ENCODE measurements at regions of chr16 and their contacts with region 1.

Region 1: DNA sequence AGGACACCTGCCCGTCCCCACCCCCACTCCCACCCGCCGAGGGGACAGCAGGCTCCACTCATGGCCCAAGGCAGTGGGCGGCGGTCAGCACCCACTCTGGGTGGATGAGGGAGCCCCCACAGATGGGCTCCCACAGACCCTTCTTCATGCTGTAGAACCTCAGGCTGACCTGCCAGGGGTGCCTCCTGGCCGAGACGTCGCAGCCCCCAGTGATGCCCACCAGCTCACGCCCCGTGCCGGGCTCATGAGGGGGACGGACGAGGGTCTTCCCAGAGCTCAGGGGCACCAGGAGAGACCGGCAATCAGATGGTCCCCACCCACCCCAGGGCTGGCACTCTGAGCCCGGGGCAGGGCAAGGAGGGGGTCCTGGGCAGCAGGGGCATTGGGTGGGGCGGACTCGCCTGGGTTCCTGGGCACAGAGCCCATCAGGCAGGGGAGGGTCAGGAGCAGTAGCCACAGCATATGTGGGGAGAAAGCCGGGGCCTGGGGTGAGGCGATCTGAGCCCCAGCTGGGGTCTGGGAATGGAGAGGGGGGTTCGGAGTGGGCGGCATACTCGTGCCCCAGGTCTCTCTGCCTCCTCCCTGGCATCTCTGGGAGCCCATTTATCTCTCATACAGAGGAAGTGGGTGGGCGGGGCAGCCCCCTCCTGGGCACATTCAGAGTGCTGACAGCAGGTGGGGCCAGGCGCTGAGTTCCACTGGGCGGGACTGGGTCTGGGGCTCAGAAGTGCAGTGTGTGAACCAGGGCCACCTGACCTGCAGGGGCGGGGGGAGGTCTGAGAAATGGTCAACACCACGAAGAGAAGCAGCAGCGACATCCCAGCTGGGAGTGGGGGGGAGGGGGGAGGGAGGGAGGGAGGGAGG is 20.6 kb upstream of the UBE2I start:
- DNase-seq: no peak
- H3K4me3 ChIP-seq: no peak overlapping the region
- H3K27me3 ChIP-seq: peaks cover 29% of the 10 kb centered on the region
- CTCF ChIP-seq: no peak

Region 2: GRCh38 chr16:1300664-1301476 is 12.0 kb after region 1 on chr16:
- CTCF ChIA-PET with region 1: interaction called, 14 read pairs
- POLR2A ChIA-PET with region 1: no interaction called
- DNase-seq: no peak
- H3K4me3 ChIP-seq: no peak overlapping the region
- H3K27me3 ChIP-seq: no peaks in the 10 kb centered on the region
- CTCF ChIP-seq: peak; percentile 97